ENCODE measurements at regions of chr1 and their contacts with region 1.

Region 1: GRCh38 chr1:161792740-161793139 is 26.6 kb downstream of the ATF6 start:
- DNase-seq: peak; percentile 95
- ATAC-seq: peak; percentile 98
- H3K4me3 ChIP-seq: no peak overlapping the region
- H3K27ac ChIP-seq: no peak overlapping the region
- H3K4me1 ChIP-seq: peaks cover 16% of the 10 kb centered on the region
- H3K27me3 ChIP-seq: no peaks in the 10 kb centered on the region
- CTCF ChIP-seq: peak; percentile 86

Region 2: GRCh38 chr1:161688946-161689345 is 103.8 kb before region 1 on chr1:
- CTCF ChIA-PET with region 1: no interaction called
- POLR2A ChIA-PET with region 1: no interaction called
- intact Hi-C with region 1: no loop called
- DNase-seq: no peak
- ATAC-seq: no peak
- H3K4me3 ChIP-seq: no peak overlapping the region
- H3K27ac ChIP-seq: no peak overlapping the region
- H3K4me1 ChIP-seq: no peaks in the 10 kb centered on the region
- H3K27me3 ChIP-seq: no peaks in the 10 kb centered on the region
- CTCF ChIP-seq: no peak

Region 3: DNA sequence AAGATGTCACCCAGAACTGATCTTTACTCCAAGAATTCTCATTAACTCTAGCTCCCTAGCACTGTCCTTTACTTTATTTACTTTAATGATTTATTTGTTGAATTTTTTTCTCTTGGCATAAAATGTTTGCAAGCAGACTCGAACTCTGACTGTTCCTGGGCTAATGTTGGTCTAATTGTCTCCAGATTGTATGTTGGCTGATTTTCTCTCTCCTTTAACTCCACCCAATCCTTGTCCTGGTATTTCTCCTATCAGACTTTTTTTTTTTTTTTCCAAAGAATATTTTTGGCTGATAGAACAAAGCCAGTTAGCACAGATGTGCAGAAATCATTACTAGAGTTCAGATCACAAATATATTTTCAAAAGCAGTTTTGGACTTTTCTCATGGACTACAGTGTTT is 55.9 kb after region 1 on chr1:
- CTCF ChIA-PET with region 1: no interaction called
- POLR2A ChIA-PET with region 1: no interaction called
- intact Hi-C with region 1: loop called (anchors 5 kb)
- DNase-seq: no peak
- ATAC-seq: no peak; the same call in 1 of the 2 replicates
- H3K4me3 ChIP-seq: no peak overlapping the region
- H3K27ac ChIP-seq: no peak overlapping the region
- H3K4me1 ChIP-seq: no peaks in the 10 kb centered on the region
- H3K27me3 ChIP-seq: no peaks in the 10 kb centered on the region
- CTCF ChIP-seq: no peak

Region 4: DNA sequence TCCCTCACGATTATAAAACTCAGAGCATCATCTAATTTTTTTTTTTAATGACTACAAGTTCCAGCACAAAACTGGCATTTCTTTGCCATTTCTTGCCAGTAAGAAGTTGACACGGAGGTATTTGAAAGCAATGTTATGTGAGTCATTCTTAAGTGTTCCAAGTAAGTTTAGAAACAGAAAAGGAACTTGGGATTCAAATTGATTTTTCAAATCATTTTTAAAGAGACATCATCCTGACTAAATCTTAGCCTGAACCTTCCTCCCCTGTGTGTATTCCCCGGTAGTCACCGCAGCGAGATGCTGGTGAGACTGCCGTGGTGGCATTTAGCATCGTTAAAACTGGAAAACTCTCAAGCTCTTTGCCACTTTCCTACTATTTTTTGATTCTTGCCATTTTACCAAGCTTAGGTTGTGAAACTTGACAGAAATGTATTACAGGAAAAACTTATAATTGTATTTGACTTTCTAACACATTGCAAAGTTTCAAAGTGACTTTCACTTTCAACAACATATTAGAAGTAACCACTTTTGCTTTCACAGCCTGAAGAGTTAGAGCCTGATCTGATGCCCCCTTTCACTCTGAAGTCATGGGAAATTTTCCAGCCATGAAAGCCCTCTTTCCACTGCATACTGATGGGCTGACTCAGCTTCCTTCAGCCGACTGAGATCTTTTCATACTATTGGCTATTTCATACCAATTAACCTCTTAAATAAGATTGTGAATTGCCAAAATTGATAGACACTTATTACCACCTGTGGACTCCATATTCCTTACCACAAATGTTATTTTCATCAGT is 169.5 kb after region 1 on chr1:
- CTCF ChIA-PET with region 1: no interaction called
- POLR2A ChIA-PET with region 1: no interaction called
- intact Hi-C with region 1: loop called (anchors 5 kb)
- DNase-seq: peak; percentile 81
- ATAC-seq: peak; percentile 86
- H3K4me3 ChIP-seq: peak overlapping the region; percentile 65
- H3K27ac ChIP-seq: peak overlapping the region; percentile 81
- H3K4me1 ChIP-seq: peaks cover 27% of the 10 kb centered on the region
- H3K27me3 ChIP-seq: no peaks in the 10 kb centered on the region
- CTCF ChIP-seq: 0 out of 2 replicates have a peak, but pooled peaks have one; percentile 16

Region 5: DNA sequence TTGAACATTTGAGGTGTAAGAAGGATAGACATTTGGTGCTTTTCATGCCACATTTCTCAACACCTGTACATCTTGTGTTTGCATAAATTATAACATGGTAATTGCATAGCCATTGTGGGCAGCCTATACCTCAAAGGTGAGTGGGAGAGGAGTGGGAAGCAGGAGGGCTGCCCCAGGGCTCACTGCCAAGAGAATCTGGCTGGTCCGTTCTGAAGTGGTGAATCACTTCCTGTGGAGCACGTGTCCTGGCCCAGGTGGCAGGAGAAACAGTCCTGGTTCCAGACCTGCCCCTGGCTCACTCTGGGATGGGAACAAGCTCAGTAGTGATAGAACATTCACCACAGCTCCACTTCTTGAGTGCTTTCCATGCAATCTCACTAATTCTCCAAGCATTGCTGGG is 242.5 kb after region 1 on chr1:
- CTCF ChIA-PET with region 1: interaction called, 175 read pairs
- POLR2A ChIA-PET with region 1: interaction called, 5 read pairs
- intact Hi-C with region 1: loop called (anchors 1 kb)
- DNase-seq: peak; percentile 72
- ATAC-seq: peak; percentile 29
- H3K4me3 ChIP-seq: no peak overlapping the region
- H3K27ac ChIP-seq: no peak overlapping the region
- H3K4me1 ChIP-seq: peaks cover 24% of the 10 kb centered on the region
- H3K27me3 ChIP-seq: no peaks in the 10 kb centered on the region
- CTCF ChIP-seq: no peak

Region 6: DNA sequence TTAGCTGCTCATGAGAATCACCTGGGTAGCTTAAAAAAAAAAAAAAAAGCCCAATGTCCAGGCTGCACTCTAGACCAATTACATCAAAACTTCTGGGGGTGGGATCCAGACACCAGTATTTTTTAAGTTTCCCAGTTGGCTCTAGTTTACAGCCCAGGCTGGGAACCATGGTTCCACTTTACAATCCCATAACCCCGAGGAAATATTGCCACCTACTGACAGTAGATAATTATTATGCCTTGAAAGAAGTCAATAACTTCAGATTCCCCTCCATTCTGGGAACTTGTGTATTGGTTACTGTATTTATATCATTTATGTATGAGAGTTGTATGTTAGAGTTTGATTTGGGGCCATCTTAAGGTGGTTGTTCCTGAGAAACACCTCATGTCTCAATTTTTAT is 483.8 kb after region 1 on chr1:
- CTCF ChIA-PET with region 1: no interaction called
- POLR2A ChIA-PET with region 1: no interaction called
- intact Hi-C with region 1: loop called (anchors 10 kb)
- DNase-seq: peak; percentile 84
- ATAC-seq: peak; percentile 68
- H3K4me3 ChIP-seq: no peak overlapping the region
- H3K27ac ChIP-seq: no peak overlapping the region
- H3K4me1 ChIP-seq: no peaks in the 10 kb centered on the region
- H3K27me3 ChIP-seq: no peaks in the 10 kb centered on the region
- CTCF ChIP-seq: peak; percentile 91

Measured in PC-3 (cell line).